GM10248 (cell line): ENCODE measurements at regions of chr17 and their contacts with region 1.

Region 1: DNA sequence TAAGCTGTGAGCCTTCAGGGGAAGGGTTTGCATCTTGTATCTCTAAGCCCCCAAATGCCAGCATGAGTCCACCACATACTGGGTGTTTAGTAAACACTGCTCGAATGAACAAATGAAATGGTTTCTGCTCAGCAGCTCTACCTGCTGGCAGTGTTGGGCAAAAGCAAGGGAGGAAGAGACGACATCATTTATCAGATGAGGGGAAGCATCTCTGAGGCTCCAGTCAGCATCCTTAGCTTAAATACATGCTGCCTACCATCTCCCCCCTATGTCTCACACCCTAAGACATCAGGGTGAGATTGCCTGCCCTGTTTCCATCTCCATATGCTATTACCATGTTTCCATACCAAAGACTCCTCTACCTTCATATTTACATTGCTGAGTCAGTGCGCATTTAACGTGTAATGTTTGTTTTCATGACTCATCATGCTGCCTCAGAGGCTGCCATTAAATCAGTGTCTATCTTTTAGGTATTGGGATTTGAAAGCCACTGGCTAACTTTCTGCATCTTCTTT is 379.8 kb downstream of the UTP18 start:
- DNase-seq: peak; percentile 16
- CTCF ChIP-seq: peak; percentile 37

Region 2: GRCh38 chr17:51650202-51650601 is 10.0 kb after region 1 on chr17:
- CTCF ChIA-PET with region 1: interaction called, 11 read pairs
- POLR2A ChIA-PET with region 1: no interaction called
- DNase-seq: no peak
- CTCF ChIP-seq: no peak